OCI-LY7 (cell line): ENCODE measurements at regions of chr12 and their contacts with region 1.

Region 1: GRCh38 chr12:17853054-17853453 is 236.9 kb downstream of the RERGL start:
- DNase-seq: no peak
- H3K4me3 ChIP-seq: no peak overlapping the region
- H3K27ac ChIP-seq: no peak overlapping the region
- H3K4me1 ChIP-seq: no peaks in the 10 kb centered on the region
- CTCF ChIP-seq: no peak

Region 2: DNA sequence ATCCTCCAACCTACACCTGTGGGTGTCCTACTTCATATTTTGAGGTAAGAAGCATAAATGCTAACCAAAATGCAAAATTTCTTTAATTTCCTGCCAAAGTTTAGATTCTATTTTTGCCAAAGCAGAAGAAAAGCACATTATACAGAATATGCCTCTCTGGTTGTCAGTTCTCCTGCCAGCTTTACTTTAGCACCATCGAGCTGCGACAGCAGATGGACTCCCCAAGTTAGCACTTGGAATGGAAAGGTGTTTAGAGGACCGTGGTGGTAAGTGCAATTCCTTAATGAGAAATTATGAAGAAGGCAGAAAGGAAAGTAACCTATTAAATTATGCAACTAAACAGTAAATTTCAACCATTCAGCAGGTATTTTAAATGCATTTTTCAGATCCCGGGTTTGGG is 89.7 kb before region 1 on chr12:
- CTCF ChIA-PET with region 1: no interaction called
- POLR2A ChIA-PET with region 1: interaction called, 3 read pairs
- intact Hi-C with region 1: loop called (anchors 5 kb)
- DNase-seq: no peak
- H3K4me3 ChIP-seq: no peak overlapping the region
- H3K27ac ChIP-seq: no peak overlapping the region
- H3K4me1 ChIP-seq: no peaks in the 10 kb centered on the region
- CTCF ChIP-seq: no peak

Region 3: GRCh38 chr12:17866802-17867201 is 13.7 kb after region 1 on chr12:
- CTCF ChIA-PET with region 1: no interaction called
- POLR2A ChIA-PET with region 1: no interaction called
- intact Hi-C with region 1: no loop called
- DNase-seq: no peak
- H3K4me3 ChIP-seq: no peak overlapping the region
- H3K27ac ChIP-seq: no peak overlapping the region
- H3K4me1 ChIP-seq: no peaks in the 10 kb centered on the region
- CTCF ChIP-seq: no peak